ENCODE measurements at regions of chr10 and their contacts with region 1.

Region 1: GRCh38 chr10:13891128-13892000 is 304.6 kb downstream of the PRPF18 start:
- DNase-seq: no peak
- H3K4me3 ChIP-seq: peak overlapping the region; percentile 40 to 42
- H3K27ac ChIP-seq: peak overlapping the region; percentile 35 to 61
- H3K4me1 ChIP-seq: no peaks in the 10 kb centered on the region
- H3K27me3 ChIP-seq: no peaks in the 10 kb centered on the region
- CTCF ChIP-seq: no peak
- POLR2A ChIP-seq: no peak

Region 2: DNA sequence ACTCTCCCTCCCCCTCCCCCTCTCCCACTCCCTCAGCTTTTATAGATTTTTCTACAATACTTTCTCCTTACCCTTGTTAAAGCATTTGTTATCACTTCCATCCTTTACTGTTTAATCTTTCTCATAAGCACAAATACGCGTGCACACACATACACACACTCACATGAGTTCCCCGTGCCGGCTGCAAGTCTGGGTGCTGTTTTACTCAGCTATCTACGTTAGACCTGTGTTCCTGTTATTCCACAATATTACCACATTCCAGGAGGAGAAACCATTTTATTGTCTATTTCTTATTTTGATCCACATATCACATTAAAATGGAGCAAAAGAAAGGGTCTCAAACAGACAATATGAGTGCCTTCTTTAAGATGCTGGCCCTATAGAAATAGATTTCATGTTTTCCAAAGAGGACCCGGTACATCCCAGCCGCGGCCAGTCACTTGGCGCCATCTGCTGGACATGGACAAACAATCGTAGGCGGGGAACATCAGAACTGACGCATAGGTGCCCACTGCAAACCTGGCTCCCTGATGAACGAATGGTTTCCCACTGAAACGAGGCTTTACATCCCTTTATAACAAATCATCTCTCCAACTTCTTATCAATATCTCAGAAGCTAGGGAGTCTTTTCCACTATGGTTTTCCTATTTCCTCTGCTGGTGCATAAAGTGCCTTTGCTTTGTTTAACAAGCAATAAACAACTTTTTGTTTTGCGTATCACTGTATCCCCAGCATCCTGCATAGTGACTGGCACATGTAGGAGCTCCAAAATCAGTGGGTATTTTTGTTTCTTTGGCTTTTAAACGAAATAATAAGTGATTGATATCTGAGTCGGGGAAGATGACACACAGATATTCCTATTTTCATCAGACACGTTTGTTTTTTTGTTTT is 816.6 kb before region 1 on chr10:
- intact Hi-C with region 1: no loop called
- DNase-seq: peak; percentile 63
- H3K4me3 ChIP-seq: no peak overlapping the region
- H3K27ac ChIP-seq: no peak overlapping the region
- H3K4me1 ChIP-seq: no peaks in the 10 kb centered on the region
- H3K27me3 ChIP-seq: no peaks in the 10 kb centered on the region
- CTCF ChIP-seq: peak; percentile 71 to 76 (median 74)
- POLR2A ChIP-seq: no peak

Region 3: DNA sequence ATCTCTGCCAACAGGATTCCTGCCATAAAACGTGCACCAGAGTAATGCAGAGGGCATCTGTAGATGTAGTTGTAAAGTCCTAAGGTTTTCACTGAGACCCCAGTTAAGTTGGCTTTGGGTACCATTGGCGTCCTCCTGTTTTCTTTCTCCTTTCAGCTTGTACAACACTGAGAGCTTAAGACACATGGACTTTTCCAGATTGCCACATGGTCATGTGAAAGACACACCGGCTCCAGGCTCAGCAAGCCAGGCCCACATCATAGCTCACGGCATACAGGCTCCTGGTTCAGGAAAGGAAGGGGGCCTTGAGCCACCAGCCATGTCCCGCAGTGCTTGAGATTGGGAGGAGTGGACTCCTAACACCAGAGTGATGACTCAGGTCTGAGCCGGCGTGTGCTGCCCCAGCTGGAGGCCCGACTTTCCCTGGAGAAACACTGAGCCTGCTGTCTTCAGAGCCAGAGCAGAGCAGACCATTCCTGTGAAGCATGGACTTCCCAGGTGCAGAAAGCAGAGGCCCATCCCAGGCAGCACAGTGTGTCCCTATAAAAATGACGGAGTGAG is 51.9 kb before region 1 on chr10:
- intact Hi-C with region 1: loop called (anchors 5 kb)
- DNase-seq: no peak
- H3K4me3 ChIP-seq: no peak overlapping the region
- H3K27ac ChIP-seq: no peak overlapping the region
- H3K4me1 ChIP-seq: no peaks in the 10 kb centered on the region
- H3K27me3 ChIP-seq: no peaks in the 10 kb centered on the region
- CTCF ChIP-seq: no peak
- POLR2A ChIP-seq: no peak

Region 4: DNA sequence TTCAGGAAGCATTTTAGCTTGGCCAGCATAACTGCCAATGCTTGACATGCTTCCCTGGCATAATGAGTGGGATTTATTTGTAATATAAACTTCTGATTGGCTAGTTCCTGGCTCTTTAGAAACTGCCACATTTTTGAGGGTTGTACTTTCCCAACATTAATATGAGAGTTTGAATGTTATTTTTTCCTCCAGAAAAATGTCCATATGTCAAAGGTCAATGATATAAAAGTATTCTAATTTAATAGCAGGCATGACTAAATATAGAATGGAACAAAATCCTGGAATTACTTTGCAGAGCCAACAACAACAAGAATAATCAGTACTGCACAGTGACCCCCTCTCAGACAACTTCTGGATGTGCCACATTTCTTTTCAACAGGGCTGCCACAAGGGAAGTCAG is 48.0 kb after region 1 on chr10:
- intact Hi-C with region 1: no loop called
- DNase-seq: no peak
- H3K4me3 ChIP-seq: no peak overlapping the region
- H3K27ac ChIP-seq: no peak overlapping the region
- H3K4me1 ChIP-seq: no peaks in the 10 kb centered on the region
- H3K27me3 ChIP-seq: no peaks in the 10 kb centered on the region
- CTCF ChIP-seq: no peak
- POLR2A ChIP-seq: no peak

Region 5: GRCh38 chr10:13956826-13957225 is 65.5 kb after region 1 on chr10:
- intact Hi-C with region 1: loop called (anchors 5 kb)
- DNase-seq: peak; percentile 8
- H3K4me3 ChIP-seq: no peak overlapping the region
- H3K27ac ChIP-seq: peak overlapping the region; percentile 30 to 36
- H3K4me1 ChIP-seq: no peaks in the 10 kb centered on the region
- H3K27me3 ChIP-seq: no peaks in the 10 kb centered on the region
- CTCF ChIP-seq: peak in 2 of 4 experiments; percentile 11 to 51
- POLR2A ChIP-seq: no peak

Region 6: GRCh38 chr10:14758994-14759664 is 867.8 kb after region 1 on chr10:
- intact Hi-C with region 1: no loop called
- DNase-seq: no peak
- H3K4me3 ChIP-seq: no peak overlapping the region
- H3K27ac ChIP-seq: no peak overlapping the region
- H3K4me1 ChIP-seq: no peaks in the 10 kb centered on the region
- H3K27me3 ChIP-seq: no peaks in the 10 kb centered on the region
- CTCF ChIP-seq: no peak
- POLR2A ChIP-seq: no peak

Measured in prostate gland (tissue), 2 donors.